Calu3 (cell line): ENCODE measurements at regions of chr1 and their contacts with region 1.

Region 1: DNA sequence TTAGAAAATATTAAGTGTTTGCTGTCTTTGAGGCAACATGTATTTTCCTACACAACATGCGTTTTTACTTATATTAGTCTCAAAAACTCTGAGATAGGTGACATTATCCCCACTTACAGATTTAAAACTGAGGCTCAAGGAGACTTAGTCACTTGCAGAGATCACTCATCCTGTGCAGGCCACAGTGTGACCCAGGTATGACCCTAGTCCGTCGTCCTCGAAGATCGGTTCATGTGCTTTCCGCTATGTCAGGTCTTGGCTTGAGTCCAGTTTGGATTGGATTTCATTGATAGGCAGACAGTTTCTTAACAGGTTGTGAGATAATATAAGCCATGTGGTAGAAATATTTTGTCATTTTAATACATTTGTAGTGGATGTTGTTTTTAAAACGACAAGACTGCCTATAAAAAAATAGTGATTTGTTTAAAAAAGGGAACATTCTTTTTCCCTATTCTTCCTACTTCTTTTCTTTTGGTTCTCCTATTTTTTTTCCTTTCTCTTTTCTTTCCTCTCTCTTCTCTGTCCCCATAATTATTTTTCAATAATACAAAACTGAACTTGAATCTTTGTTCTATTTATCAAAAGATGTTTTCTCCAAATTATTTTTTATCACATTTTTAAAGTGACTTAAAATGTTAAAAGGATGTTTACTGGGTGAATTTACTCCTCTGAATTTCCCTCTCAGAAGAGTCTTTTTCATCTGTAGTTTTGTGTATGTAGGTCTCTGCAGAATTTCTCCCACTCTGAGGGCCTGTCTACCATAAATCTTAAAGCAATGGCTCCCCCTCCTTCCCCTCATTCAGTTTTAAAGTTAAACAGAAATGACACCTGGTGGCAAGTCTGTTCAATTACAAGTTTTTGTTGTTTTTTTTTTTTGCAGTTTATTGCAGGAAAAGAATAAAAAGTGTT is 81.8 kb downstream of the PHTF1 start:
- DNase-seq: peak; percentile 52
- H3K4me3 Mint-ChIP-seq: no peak overlapping the region
- H3K27ac Mint-ChIP-seq: peak overlapping the region; percentile 37
- H3K4me1 Mint-ChIP-seq: peaks cover 36% of the 10 kb centered on the region
- H3K27me3 Mint-ChIP-seq: no peaks in the 10 kb centered on the region
- CTCF ChIP-seq: peak; percentile 36

Region 2: GRCh38 chr1:112715264-112716053 is 962.0 kb before region 1 on chr1 and contains the start of gene PPM1J:
- CTCF ChIA-PET with region 1: no interaction called
- intact Hi-C with region 1: loop called (anchors 5 kb)
- DNase-seq: peak; percentile 97
- H3K4me3 Mint-ChIP-seq: peak within 1 kb of the TSS; percentile 71
- H3K27ac Mint-ChIP-seq: no peak within 1 kb of the TSS
- H3K4me1 Mint-ChIP-seq: peaks cover 7% of the 10 kb centered on the region
- H3K27me3 Mint-ChIP-seq: peaks cover 21% of the 10 kb centered on the region
- CTCF ChIP-seq: no peak
- total RNA-seq, gene PPM1J: 1.3 and 2.2 TPM in 2 replicates

Region 3: GRCh38 chr1:113140588-113141446 is 536.7 kb before region 1 on chr1:
- CTCF ChIA-PET with region 1: interaction called, 6 read pairs
- intact Hi-C with region 1: loop called (anchors 1 kb)
- DNase-seq: peak; percentile 56
- H3K4me3 Mint-ChIP-seq: no peak overlapping the region
- H3K27ac Mint-ChIP-seq: no peak overlapping the region
- H3K4me1 Mint-ChIP-seq: peaks cover 13% of the 10 kb centered on the region
- H3K27me3 Mint-ChIP-seq: no peaks in the 10 kb centered on the region
- CTCF ChIP-seq: peak; percentile 68

Region 4: GRCh38 chr1:113325039-113325438 is 352.5 kb before region 1 on chr1:
- CTCF ChIA-PET with region 1: no interaction called
- intact Hi-C with region 1: loop called (anchors 10 kb)
- DNase-seq: peak; percentile 47
- H3K4me3 Mint-ChIP-seq: no peak overlapping the region
- H3K27ac Mint-ChIP-seq: peak overlapping the region; percentile 48
- H3K4me1 Mint-ChIP-seq: peaks cover 17% of the 10 kb centered on the region
- H3K27me3 Mint-ChIP-seq: no peaks in the 10 kb centered on the region
- CTCF ChIP-seq: no peak

Region 5: DNA sequence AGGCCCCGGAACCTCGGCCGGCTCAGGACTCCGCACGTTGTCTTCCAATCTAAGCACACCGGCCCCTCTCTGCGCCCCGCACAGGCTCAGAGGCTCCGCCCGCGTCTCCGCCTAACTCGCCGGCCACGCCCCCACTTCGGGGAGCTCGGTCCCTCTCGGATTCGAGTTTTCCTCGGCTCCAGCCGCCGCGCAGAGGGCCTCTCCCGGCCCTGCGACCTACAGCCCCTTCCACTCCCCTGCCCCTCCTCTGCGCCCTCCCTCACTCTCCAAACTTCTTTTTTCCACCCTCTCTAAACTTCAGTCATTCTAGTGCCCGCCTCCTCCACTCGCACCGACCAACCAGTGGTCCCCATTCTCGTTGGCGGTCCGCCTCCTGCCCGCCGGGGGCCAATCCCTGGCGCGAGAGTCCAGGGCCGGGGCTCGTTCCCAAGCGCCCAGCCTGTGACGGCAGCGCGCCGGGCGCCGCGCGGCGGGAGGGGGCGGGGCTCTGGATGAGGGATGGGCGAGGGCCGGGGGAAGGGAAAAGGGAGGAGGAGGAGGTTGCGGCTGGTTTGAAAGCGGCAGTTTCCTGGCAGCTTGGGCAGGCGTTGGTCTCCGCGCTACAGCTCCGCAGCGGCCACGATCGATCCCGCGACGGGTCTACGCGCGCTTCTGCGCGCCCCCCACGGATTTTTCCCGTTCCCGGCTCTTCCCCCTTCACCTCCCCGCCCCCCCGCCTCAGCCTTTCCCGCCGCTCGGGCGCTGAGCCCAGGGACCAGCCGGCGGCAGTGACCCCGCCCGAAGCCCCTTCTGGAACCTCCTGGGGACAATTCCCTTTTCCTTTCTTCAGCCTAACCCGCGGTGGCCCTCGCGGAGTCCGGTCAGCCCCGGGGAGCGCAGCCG is 287.3 kb before region 1 on chr1 and contains the start of gene MAGI3:
- CTCF ChIA-PET with region 1: no interaction called
- intact Hi-C with region 1: loop called (anchors 5 kb)
- DNase-seq: peak; percentile 96
- H3K4me3 Mint-ChIP-seq: peak within 1 kb of the TSS; percentile 88
- H3K27ac Mint-ChIP-seq: peak within 1 kb of the TSS; percentile 93
- H3K4me1 Mint-ChIP-seq: peaks cover 17% of the 10 kb centered on the region
- H3K27me3 Mint-ChIP-seq: no peaks in the 10 kb centered on the region
- CTCF ChIP-seq: no peak
- total RNA-seq, gene MAGI3: 13.4 and 14.2 TPM in 2 replicates

Region 6: DNA sequence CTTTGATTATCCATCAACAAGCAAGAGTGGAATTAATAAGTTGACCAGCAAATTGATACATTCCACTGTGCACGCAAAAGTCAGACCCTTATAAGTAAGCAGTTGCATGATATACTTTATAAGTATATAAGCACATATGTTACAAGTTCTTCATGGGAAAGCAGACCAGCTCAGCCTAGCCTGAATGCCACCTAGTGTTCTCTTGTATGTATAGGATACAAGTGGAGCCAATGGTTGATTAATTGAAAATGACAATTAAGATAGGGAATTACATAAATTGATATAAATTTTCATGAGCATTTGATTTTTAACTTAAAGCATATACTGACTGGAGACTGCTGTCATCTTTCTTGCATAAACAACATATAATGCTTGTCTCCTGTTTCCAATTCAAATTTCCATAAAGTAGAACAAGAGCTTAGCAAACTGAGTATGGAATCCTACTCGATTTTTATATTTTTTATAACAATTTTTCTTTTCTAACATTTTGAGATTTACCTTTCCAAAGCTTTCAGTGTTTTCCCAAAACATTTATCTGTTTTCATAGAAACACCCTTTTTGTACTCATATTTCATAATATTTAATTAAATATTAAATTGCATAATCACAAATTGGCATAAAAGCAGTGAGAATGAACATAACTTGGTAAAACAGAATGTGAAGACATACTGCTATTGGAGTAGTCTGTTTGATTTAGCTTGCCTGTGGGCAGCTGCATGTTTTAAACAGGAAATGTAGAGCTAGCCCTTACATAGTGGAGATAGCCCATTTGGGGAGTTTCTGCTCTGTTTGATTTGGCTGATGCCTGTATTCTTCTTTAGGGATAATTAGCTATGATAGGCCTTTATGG is 224.4 kb before region 1 on chr1:
- CTCF ChIA-PET with region 1: no interaction called
- intact Hi-C with region 1: loop called (anchors 5 kb)
- DNase-seq: no peak
- H3K4me3 Mint-ChIP-seq: no peak overlapping the region
- H3K27ac Mint-ChIP-seq: no peak overlapping the region
- H3K4me1 Mint-ChIP-seq: peaks cover 41% of the 10 kb centered on the region
- H3K27me3 Mint-ChIP-seq: no peaks in the 10 kb centered on the region
- CTCF ChIP-seq: no peak